ENCODE measurements at regions of chr12 and their contacts with region 1.

Region 1: GRCh38 chr12:76037130-76038103 is 5.8 kb upstream of the PHLDA1 start:
- DNase-seq: peak in 1 of 2 donors; percentile 83
- ATAC-seq: peak; percentile 74 to 87 (median 85)
- H3K4me3 ChIP-seq: no peak overlapping the region
- H3K4me3 Mint-ChIP-seq: no peak overlapping the region
- H3K27ac ChIP-seq: no peak overlapping the region
- H3K27ac Mint-ChIP-seq: peak overlapping the region in 1 of 2 donors; percentile 21
- H3K4me1 ChIP-seq: peaks cover 8% of the 10 kb centered on the region
- H3K4me1 Mint-ChIP-seq: peaks cover 8 to 12% of the 10 kb centered on the region in 2 donors
- H3K27me3 ChIP-seq: peaks cover 2% of the 10 kb centered on the region
- H3K27me3 Mint-ChIP-seq: no peaks in the 10 kb centered on the region
- CTCF ChIP-seq: peak; percentile 78

Region 2: DNA sequence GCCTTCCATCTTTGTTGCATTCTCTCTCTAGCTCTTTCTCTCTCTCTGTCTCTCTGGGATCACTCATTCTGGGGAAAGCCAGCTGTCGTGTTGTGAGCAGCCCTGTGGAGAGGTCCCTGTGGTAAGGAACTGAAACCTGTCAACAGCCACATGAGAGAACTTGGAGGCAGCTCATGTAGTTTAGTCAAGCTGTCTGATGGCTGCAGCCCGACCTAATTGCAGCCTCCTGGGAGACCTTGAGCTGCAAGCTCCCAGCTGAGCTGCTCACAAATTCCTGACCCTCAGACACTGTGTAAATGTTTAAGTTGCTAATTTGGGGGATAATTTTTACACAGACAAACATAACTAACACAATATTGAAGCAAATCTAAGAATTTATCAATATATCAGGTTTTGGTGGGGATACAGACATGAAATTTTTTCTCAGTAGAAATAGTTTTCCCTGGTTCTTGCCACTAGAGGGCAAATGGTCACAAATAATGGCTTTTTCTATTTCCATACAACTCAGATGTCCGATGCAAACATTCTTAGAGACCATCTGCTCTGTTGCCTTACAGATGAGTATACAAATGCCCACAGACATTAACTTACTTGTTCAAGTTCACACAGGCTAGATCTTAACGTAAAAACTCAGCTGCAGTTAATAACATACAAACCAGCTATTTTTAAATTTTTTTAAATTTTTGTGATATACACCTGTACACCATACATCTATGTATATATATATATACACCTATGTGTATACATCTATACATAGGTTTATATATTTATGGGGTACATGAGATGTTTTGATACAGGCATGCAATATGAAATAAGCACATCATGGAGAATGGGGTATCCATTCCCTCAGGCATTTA is 510.5 kb before region 1 on chr12:
- intact Hi-C with region 1: loop called (anchors 1 kb)
- DNase-seq: peak in 1 of 2 donors; percentile 63
- ATAC-seq: peak in 2 of 3 donors; percentile 32 to 63
- H3K4me3 ChIP-seq: no peak overlapping the region
- H3K4me3 Mint-ChIP-seq: no peak overlapping the region
- H3K27ac ChIP-seq: no peak overlapping the region
- H3K27ac Mint-ChIP-seq: no peak overlapping the region
- H3K4me1 ChIP-seq: no peaks in the 10 kb centered on the region
- H3K4me1 Mint-ChIP-seq: peaks cover 0 to 4% of the 10 kb centered on the region in 2 donors
- H3K27me3 ChIP-seq: peaks cover 5% of the 10 kb centered on the region
- H3K27me3 Mint-ChIP-seq: peaks cover 35 to 39% of the 10 kb centered on the region in 2 donors
- CTCF ChIP-seq: peak; percentile 59

Region 3: DNA sequence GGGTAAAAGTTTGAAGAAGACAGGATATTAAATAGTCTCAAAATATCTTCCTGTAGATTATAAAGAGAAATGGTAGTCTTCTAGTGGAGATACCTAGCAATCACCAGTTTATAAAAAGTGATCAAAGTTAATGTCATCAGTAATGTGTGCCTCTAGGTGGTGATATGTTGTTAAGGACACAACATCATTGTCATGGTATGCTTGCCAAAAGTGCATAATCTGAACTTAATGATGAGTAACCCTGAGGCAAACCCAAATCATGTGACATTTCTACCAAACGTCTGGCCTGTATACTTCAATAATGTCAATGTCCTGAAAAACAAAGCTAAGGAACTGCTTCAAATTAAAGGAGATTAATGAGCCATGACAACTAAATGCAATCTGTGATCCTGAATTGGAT is 220.5 kb before region 1 on chr12:
- intact Hi-C with region 1: loop called (anchors 2 kb)
- DNase-seq: peak in 1 of 2 donors; percentile 41
- ATAC-seq: peak in 2 of 3 donors; percentile 63 to 78
- H3K4me3 ChIP-seq: no peak overlapping the region
- H3K4me3 Mint-ChIP-seq: no peak overlapping the region
- H3K27ac ChIP-seq: no peak overlapping the region
- H3K27ac Mint-ChIP-seq: no peak overlapping the region
- H3K4me1 ChIP-seq: no peaks in the 10 kb centered on the region
- H3K4me1 Mint-ChIP-seq: no peaks in the 10 kb centered on the region
- H3K27me3 ChIP-seq: no peaks in the 10 kb centered on the region
- H3K27me3 Mint-ChIP-seq: peaks cover 5 to 20% of the 10 kb centered on the region in 2 donors
- CTCF ChIP-seq: no peak

Region 4: DNA sequence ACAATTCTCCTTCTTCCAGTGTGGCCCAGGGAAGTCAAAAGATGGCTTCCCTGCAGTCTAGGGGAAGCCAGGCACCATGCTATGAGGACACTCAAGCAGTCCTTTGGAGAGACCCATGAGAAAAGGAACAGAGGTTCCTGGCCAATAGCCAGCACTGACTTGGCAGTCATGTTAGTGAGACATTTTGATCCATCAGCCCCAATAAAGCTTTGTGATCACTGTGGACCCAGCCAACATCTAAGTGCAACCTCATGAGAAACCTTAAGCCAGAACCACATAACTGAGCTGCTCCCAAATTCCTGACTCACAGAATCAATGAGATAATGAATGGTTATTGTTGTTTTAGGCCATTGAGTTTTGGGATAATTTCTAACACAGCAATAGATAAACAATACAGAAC is 98.0 kb after region 1 on chr12:
- intact Hi-C with region 1: no loop called
- DNase-seq: no peak
- ATAC-seq: no peak
- H3K4me3 ChIP-seq: no peak overlapping the region
- H3K4me3 Mint-ChIP-seq: no peak overlapping the region
- H3K27ac ChIP-seq: no peak overlapping the region
- H3K27ac Mint-ChIP-seq: no peak overlapping the region
- H3K4me1 ChIP-seq: no peaks in the 10 kb centered on the region
- H3K4me1 Mint-ChIP-seq: no peaks in the 10 kb centered on the region
- H3K27me3 ChIP-seq: no peaks in the 10 kb centered on the region
- H3K27me3 Mint-ChIP-seq: peaks cover 2 to 16% of the 10 kb centered on the region in 2 donors
- CTCF ChIP-seq: no peak